Breast epithelium (tissue), 4 donors: ENCODE measurements at regions of chr2 and their contacts with region 1.

Region 1: GRCh38 chr2:102010902-102011301 is 19.1 kb downstream of the IL1R2 start:
- DNase-seq: no peak
- H3K4me3 ChIP-seq: no peak overlapping the region
- H3K27ac ChIP-seq: no peak overlapping the region
- H3K4me1 ChIP-seq: no peaks in the 10 kb centered on the region
- H3K27me3 ChIP-seq: no peaks in the 10 kb centered on the region
- CTCF ChIP-seq: no peak
- POLR2A ChIP-seq: no peak

Region 2: GRCh38 chr2:101272045-101272784 is 738.7 kb before region 1 on chr2:
- intact Hi-C with region 1: no loop called
- DNase-seq: no peak
- H3K4me3 ChIP-seq: no peak overlapping the region
- H3K27ac ChIP-seq: no peak overlapping the region
- H3K4me1 ChIP-seq: no peaks in the 10 kb centered on the region
- H3K27me3 ChIP-seq: no peaks in the 10 kb centered on the region
- CTCF ChIP-seq: no peak
- POLR2A ChIP-seq: no peak

Region 3: DNA sequence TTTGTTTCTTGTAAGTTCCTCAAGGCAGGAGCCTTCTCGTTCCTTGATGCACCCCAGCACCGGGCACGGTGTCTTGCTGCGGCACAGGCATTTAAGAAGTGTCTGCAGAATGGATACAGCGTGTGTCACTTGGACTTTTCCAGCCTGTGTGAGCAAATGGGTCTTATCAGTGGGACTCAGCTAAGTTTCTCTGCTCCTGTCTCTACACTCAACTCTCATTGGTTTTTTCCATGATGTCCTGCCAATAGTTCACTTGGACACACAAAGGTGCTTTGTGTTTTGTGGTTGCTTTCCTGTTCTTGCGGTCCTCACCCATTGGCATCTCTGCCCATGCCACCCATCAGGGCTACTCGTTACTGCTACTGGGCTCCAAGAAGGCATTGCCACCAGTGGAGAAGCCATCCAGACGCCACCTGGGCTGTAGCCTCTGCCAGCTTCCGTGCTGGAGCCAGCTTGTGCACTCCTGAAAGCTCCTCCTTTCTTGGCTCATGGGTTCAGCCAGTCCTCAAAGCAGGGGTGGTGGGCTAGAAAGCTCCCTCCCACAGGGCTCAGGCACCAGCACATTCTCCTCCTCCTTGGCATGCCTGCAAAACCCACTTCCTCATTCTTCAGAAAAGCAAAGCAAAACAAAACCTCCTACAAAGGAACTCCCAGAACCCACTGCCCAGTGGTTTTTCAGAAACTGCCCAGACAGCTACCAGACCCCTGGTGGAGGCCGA is 22.3 kb after region 1 on chr2:
- intact Hi-C with region 1: no loop called
- DNase-seq: peak; percentile 72 to 90
- H3K4me3 ChIP-seq: peak overlapping the region in 1 of 3 donors; percentile 30
- H3K27ac ChIP-seq: peak overlapping the region; percentile 76 to 81
- H3K4me1 ChIP-seq: peaks cover 5 to 7% of the 10 kb centered on the region in 2 donors
- H3K27me3 ChIP-seq: no peaks in the 10 kb centered on the region
- CTCF ChIP-seq: no peak
- POLR2A ChIP-seq: no peak

Region 4: GRCh38 chr2:102235491-102235890 is 224.6 kb after region 1 on chr2:
- intact Hi-C with region 1: loop called (anchors 10 kb)
- DNase-seq: no peak
- H3K4me3 ChIP-seq: no peak overlapping the region
- H3K27ac ChIP-seq: no peak overlapping the region
- H3K4me1 ChIP-seq: no peaks in the 10 kb centered on the region
- H3K27me3 ChIP-seq: no peaks in the 10 kb centered on the region
- CTCF ChIP-seq: no peak
- POLR2A ChIP-seq: no peak

Region 5: GRCh38 chr2:103963146-103963725 is 1952.3 kb after region 1 on chr2:
- intact Hi-C with region 1: no loop called
- DNase-seq: no peak
- H3K4me3 ChIP-seq: no peak overlapping the region
- H3K27ac ChIP-seq: no peak overlapping the region
- H3K4me1 ChIP-seq: no peaks in the 10 kb centered on the region
- H3K27me3 ChIP-seq: no peaks in the 10 kb centered on the region
- CTCF ChIP-seq: no peak
- POLR2A ChIP-seq: no peak